WTC11 (cell line): ENCODE measurements at regions of chr1 and their contacts with region 1.

Region 1: DNA sequence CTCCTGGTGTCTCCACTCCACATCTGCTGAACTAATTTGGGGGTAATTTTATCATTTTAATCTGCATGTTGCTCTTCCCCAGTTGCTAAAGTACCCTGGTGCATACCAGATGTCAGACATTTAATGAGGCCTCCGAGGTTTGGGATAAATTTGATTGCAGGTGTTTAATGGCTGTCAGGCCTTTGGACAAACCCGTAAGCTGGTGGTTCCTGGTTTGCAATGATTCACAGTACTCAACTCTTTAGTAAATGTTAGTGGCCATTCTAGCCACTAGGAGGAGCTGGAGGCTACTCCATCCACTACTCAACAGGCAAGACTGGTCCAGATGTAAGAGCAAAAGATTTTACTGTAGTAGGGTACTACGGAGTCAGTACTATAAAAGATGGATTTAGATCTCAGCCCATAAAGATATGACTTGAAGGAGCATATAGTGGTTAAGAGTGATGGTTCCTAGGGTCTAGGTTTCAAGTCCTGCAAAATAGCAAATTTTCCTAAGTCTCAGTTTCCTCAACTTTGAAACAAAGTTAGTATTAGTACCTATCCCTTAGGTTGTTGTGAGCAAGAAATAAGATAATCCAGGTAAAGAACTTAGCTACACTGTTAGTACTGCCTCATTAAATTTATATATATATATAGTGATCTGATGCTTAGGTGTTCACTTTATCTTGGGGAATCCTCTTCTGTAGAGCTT is 132.8 kb downstream of the SNX7 start:
- DNase-seq: peak; percentile 29
- ATAC-seq: peak; percentile 97
- H3K4me3 Mint-ChIP-seq: no peak overlapping the region
- H3K27ac Mint-ChIP-seq: peak overlapping the region; percentile 66; the same call in 1 of the 2 replicates
- H3K4me1 Mint-ChIP-seq: peaks cover 6% of the 10 kb centered on the region
- H3K27me3 Mint-ChIP-seq: no peaks in the 10 kb centered on the region
- CTCF ChIP-seq: peak; percentile 36; the same call in 1 of the 2 replicates

Region 2: GRCh38 chr1:98781906-98782305 is 12.4 kb before region 1 on chr1:
- CTCF ChIA-PET with region 1: interaction called, 12 read pairs
- POLR2A ChIA-PET with region 1: no interaction called
- DNase-seq: no peak
- ATAC-seq: no peak
- H3K4me3 Mint-ChIP-seq: no peak overlapping the region
- H3K27ac Mint-ChIP-seq: no peak overlapping the region
- H3K4me1 Mint-ChIP-seq: peaks cover 4% of the 10 kb centered on the region
- H3K27me3 Mint-ChIP-seq: no peaks in the 10 kb centered on the region; the same call in 1 of the 2 replicates
- CTCF ChIP-seq: no peak